Lower leg skin (tissue), 4 donors: ENCODE measurements at regions of chr21 and their contacts with region 1.

Region 1: GRCh38 chr21:32448803-32449594 is 36.5 kb downstream of the EVA1C start:
- DNase-seq: no peak
- H3K4me3 ChIP-seq: no peak overlapping the region
- CTCF ChIP-seq: no peak
- POLR2A ChIP-seq: no peak

Region 2: DNA sequence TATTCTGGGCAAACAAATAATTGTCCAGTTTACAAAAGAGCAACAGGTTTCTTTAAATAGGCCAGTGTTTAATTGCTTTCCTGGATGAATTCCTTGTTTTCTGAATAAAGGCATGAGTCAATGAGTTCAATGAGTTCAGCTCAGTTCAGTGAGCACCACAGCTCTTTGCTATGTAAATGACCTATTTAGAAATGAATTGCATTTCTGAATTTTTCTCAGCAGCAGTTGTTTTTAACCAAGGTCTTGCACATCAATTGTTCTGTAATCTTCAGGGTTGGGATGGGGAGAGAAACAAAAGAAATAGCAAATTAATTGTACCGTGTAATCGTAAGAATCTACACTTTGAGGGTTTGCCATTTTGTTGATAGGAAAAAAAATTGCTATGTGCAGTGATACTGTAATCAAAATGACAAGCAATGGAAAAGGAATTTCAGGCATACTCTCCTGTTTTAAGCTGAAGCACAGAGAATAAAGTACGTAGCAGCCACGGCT is 215.9 kb before region 1 on chr21:
- intact Hi-C with region 1: no loop called
- DNase-seq: no peak
- H3K4me3 ChIP-seq: no peak overlapping the region
- CTCF ChIP-seq: no peak
- POLR2A ChIP-seq: no peak

Region 3: GRCh38 chr21:32494934-32495703 is 46.1 kb after region 1 on chr21:
- intact Hi-C with region 1: loop called (anchors 5 kb)
- DNase-seq: peak in 1 of 2 donors; percentile 25
- H3K4me3 ChIP-seq: no peak overlapping the region
- CTCF ChIP-seq: no peak
- POLR2A ChIP-seq: no peak